Activated CD8-positive, alpha-beta T cell treated with anti-CD3 and anti-CD28 coated beads, Interleukin-2, amount 10 ng/mL, durations not matched to agents 7 days and 5 days (primary cell): ENCODE measurements at regions of chr9 and their contacts with region 1.

Region 1: DNA sequence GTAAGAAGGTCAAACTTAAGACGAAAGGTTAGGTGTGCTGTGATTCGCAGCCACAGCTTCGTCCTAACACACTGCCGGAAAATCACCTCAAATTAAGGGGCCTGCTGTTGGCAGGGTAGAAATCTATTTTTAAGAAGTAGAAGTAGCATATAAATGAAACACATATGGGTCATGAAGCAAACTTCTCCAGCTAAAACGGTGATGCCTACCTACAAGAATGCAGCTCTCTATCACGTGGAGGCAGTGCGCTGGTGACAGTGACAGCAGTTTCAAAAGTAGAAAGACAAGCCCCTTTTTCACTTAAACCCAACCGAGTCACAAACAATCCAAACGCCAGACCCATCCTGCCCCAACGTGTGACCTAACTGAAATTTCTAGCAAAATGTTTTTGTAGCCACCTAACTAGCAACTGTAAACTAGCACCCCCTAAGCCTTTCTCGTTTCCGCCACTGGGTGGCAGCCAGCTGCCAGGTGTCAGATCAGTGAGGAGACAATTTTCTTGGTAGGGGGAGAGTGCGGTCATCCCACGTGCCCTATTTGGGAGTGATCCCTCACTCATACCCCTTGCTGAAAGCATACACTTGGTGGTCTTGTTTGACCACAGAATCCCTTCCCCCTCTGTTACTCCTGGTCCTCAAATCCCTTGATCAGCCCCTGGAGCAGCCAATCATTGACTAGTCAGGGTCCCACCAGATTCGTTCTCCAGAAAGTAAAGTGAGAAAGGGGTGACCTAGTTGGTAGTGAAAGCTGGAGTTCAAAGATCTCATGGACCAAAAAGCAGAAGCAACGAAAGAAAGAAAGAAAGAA is 71.8 kb upstream of the MAMDC2 start:
- DNase-seq: peak; percentile 66
- ATAC-seq: peak; percentile 51
- H3K4me3 Mint-ChIP-seq: no peak overlapping the region
- H3K27ac Mint-ChIP-seq: no peak overlapping the region
- H3K4me1 Mint-ChIP-seq: no peaks in the 10 kb centered on the region
- H3K27me3 Mint-ChIP-seq: peaks cover 2% of the 10 kb centered on the region

Region 2: GRCh38 chr9:69981686-69982450 is 10.0 kb after region 1 on chr9:
- CTCF ChIA-PET with region 1: interaction called, 10 read pairs
- POLR2A ChIA-PET with region 1: no interaction called
- DNase-seq: no peak
- ATAC-seq: no peak
- H3K4me3 Mint-ChIP-seq: no peak overlapping the region
- H3K27ac Mint-ChIP-seq: no peak overlapping the region
- H3K4me1 Mint-ChIP-seq: no peaks in the 10 kb centered on the region
- H3K27me3 Mint-ChIP-seq: peaks cover 18% of the 10 kb centered on the region